Left colon (tissue), 2 donors: ENCODE measurements at regions of chr11 and their contacts with region 1.

Region 1: DNA sequence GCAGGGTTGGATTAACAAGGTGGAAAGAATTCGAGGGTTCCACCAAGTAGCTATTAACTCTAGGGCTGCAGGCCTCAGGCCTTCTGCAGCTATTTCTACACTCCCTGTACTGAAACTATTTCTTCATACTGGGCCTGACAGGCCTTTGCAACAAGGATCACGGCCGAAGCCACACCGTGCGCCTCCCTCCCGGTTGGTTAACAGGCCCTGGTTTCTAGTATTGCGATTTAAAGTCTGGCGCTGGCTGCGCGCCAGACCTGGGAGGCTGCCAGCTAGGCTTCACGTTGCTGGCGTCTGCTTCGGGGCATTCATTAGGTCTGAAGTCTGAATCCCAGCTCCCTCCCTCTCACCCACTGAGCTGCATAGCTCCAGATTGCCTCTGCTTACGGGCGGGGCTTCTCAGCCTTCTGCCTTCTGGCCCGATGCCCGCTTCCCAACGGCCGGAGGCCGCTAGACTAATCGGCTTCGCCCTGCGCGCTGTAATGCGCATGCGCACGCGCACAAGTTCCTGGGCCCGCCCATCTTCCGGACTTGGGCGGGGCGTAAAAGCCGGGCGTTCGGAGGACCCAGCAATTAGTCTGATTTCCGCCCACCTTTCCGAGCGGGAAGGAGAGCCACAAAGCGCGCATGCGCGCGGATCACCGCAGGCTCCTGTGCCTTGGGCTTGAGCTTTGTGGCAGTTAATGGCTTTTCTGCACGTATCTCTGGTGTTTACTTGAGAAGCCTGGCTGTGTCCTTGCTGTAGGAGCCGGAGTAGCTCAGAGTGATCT is 1.6 kb downstream of the LDHA start:
- DNase-seq: peak; percentile 98 to 99
- ATAC-seq: peak; percentile 80

Region 2: GRCh38 chr11:18321980-18322711 is 73.8 kb before region 1 on chr11 and contains the starts of genes GTF2H1 and HPS5:
- intact Hi-C with region 1: loop called in 1 of 2 experiments (anchors 5 kb)
- DNase-seq: peak; percentile 96 to 98
- ATAC-seq: peak; percentile 97
- total RNA-seq, gene GTF2H1: 29.3 to 30.0 TPM
- total RNA-seq, gene HPS5: 8.4 to 12.9 TPM

Region 3: GRCh38 chr11:18457431-18457830 is 61.5 kb after region 1 on chr11:
- intact Hi-C with region 1: no loop called
- DNase-seq: no peak
- ATAC-seq: peak; percentile 37

Region 4: GRCh38 chr11:18522381-18522780 is 126.5 kb after region 1 on chr11:
- intact Hi-C with region 1: loop called in 1 of 2 experiments (anchors 10 kb)
- DNase-seq: no peak
- ATAC-seq: no peak